ENCODE measurements at regions of chr16 and their contacts with region 1.

Region 1: GRCh38 chr16:27367461-27368357 is 34.3 kb upstream of the IL21R start:
- DNase-seq: peak; percentile 70 to 98 (median 86)
- ATAC-seq: peak; percentile 79
- H3K4me3 ChIP-seq: peak overlapping the region; percentile 23
- H3K4me3 Mint-ChIP-seq: peak overlapping the region; percentile 35
- H3K27ac ChIP-seq: peak overlapping the region; percentile 86 to 98
- H3K27ac Mint-ChIP-seq: peak overlapping the region; percentile 99
- H3K4me1 ChIP-seq: peaks cover 71% of the 10 kb centered on the region
- H3K4me1 Mint-ChIP-seq: peaks cover 72% of the 10 kb centered on the region
- H3K27me3 ChIP-seq: no peaks in the 10 kb centered on the region
- H3K27me3 Mint-ChIP-seq: no peaks in the 10 kb centered on the region
- CTCF ChIP-seq: peak; percentile 87

Region 2: DNA sequence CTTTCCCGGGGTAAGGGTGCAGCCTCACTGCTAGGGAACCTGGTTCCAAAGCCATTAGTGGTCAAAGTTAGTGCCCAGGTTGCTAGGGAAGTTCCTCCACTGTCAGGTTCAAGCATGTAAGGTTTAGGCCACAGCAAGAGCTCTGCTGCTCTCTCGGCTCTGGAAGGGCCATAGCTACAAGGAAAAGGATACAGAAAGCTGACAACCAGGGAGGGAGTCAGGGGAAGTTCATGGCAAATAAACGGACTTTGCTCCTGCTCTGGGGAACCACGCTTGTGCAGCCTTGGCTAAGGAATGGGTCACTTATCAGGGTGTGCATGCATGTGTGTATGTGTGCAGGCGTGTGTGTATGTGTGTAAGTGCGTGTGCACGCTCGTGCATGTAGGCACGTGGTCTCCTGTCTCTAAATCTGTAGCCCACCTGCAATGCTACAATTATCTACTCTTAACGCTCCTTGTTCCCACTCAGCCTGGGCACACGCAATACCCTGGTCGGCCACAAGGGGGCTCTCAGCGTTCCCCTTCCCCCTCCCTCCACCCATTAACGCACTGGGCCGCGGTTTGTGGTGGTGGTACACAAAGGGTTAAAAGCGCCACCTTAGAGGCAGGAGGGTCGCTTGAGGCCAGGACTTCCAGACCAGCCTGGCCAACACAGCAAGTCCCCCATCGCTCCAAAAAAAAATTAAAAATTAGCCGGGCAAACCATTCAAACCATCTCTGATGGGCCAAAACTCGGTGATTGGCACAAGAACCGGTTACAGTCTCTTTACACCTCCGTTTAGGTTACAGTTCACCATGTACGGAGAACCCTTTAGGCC is 212.8 kb before region 1 on chr16:
- CTCF ChIA-PET with region 1: interaction called, 7 read pairs
- POLR2A ChIA-PET with region 1: interaction called, 3 read pairs
- intact Hi-C with region 1: loop called in 1 of 2 experiments (anchors 1 kb)
- DNase-seq: peak; percentile 51 to 83 (median 67)
- ATAC-seq: peak; percentile 84
- H3K4me3 ChIP-seq: no peak overlapping the region
- H3K4me3 Mint-ChIP-seq: no peak overlapping the region
- H3K27ac ChIP-seq: no peak overlapping the region
- H3K27ac Mint-ChIP-seq: no peak overlapping the region
- H3K4me1 ChIP-seq: peaks cover 9% of the 10 kb centered on the region
- H3K4me1 Mint-ChIP-seq: peaks cover 14% of the 10 kb centered on the region
- H3K27me3 ChIP-seq: no peaks in the 10 kb centered on the region
- H3K27me3 Mint-ChIP-seq: no peaks in the 10 kb centered on the region
- CTCF ChIP-seq: peak; percentile 99

Region 3: GRCh38 chr16:27179500-27180072 is 188.1 kb before region 1 on chr16:
- CTCF ChIA-PET with region 1: interaction called, 23 read pairs
- POLR2A ChIA-PET with region 1: interaction called, 26 read pairs
- intact Hi-C with region 1: loop called (anchors 2 to 5 kb)
- DNase-seq: peak; percentile 83 to 95 (median 86)
- ATAC-seq: peak; percentile 99
- H3K4me3 ChIP-seq: no peak overlapping the region
- H3K4me3 Mint-ChIP-seq: no peak overlapping the region
- H3K27ac ChIP-seq: no peak overlapping the region
- H3K27ac Mint-ChIP-seq: peak overlapping the region; percentile 72
- H3K4me1 ChIP-seq: peaks cover 35% of the 10 kb centered on the region
- H3K4me1 Mint-ChIP-seq: peaks cover 55% of the 10 kb centered on the region
- H3K27me3 ChIP-seq: no peaks in the 10 kb centered on the region
- H3K27me3 Mint-ChIP-seq: no peaks in the 10 kb centered on the region
- CTCF ChIP-seq: peak; percentile 84

Region 4: DNA sequence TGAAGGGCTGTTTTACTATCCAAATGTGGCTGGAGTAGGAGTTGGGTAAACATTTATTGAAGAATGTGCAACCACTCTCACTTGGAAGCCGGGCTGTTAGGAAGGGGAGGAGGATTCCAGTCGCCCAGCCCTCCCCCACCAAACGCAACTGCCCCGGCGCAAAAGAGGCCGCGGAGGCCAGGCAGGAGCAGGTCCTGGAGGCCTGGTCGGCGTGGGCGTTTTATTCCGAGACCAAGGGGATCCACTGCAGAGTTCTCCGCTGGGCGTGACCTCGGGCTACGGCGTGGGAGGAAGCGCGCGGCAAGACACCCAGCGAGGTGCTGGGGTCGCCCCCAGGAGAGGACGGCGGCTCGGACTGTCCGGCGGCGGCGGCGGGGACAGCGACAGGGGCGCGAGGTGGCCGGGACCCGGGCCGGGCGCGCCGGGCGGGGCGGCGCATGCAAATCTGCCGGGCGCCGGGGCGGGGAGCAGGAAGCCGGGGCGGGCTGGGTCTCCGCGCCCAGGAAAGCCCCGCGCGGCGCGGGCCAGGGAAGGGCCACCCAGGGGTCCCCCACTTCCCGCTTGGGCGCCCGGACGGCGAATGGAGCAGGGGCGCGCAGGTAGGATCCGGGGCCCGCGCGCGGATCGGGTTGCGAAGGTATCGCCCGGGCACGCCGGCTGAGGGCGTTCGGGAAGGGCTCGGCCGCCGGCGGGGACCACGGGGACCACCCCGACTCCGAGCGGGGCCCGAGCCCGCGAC is 54.1 kb before region 1 on chr16 and contains the start of gene IL4R:
- CTCF ChIA-PET with region 1: interaction called, 31 read pairs
- POLR2A ChIA-PET with region 1: interaction called, 9 read pairs
- intact Hi-C with region 1: loop called (anchors 5 kb)
- DNase-seq: peak; percentile 33 to 84 (median 56)
- ATAC-seq: peak; percentile 46
- H3K4me3 ChIP-seq: peak within 1 kb of the TSS; percentile 91
- H3K4me3 Mint-ChIP-seq: peak within 1 kb of the TSS; percentile 95
- H3K27ac ChIP-seq: peak within 1 kb of the TSS; percentile 89 to 94
- H3K27ac Mint-ChIP-seq: peak within 1 kb of the TSS; percentile 92
- H3K4me1 ChIP-seq: peaks cover 56% of the 10 kb centered on the region
- H3K4me1 Mint-ChIP-seq: peaks cover 47% of the 10 kb centered on the region
- H3K27me3 ChIP-seq: no peaks in the 10 kb centered on the region
- H3K27me3 Mint-ChIP-seq: no peaks in the 10 kb centered on the region
- CTCF ChIP-seq: no peak
- total RNA-seq, gene IL4R: 145 to 147 TPM

Region 5: DNA sequence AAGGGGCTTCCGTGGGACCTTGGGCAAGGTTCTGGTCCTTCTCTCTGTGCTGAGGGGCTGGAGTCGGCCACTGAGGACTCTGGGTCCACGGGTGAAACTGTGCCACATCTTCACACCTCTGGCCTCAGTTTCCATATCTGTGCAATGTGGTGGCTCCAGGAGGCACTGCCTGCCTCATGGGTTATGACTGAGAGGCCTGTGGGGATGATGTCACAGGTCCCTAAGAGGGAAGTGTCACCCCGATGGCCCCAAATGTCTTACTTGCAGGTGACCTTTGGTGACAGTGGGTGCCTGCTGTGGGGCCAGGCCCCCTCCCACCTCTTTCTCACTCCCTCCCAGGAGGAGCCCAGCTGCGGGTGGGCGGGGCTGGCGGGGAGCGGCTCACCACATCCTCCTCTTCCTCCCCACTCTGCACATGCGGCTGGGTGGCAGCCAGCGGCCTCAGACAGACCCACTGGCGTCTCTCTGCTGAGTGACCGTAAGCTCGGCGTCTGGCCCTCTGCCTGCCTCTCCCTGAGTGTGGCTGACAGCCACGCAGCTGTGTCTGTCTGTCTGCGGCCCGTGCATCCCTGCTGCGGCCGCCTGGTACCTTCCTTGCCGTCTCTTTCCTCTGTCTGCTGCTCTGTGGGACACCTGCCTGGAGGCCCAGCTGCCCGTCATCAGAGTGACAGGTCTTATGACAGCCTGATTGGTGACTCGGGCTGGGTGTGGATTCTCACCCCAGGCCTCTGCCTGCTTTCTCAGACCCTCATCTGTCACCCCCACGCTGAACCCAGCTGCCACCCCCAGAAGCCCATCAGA is 34.3 kb after region 1 on chr16 and contains the start of gene IL21R:
- CTCF ChIA-PET with region 1: interaction called, 16 read pairs
- POLR2A ChIA-PET with region 1: interaction called, 134 read pairs
- intact Hi-C with region 1: loop called (anchors 1 to 5 kb)
- DNase-seq: peak; percentile 76 to 95 (median 86)
- ATAC-seq: peak; percentile 81
- H3K4me3 ChIP-seq: peak within 1 kb of the TSS; percentile 99
- H3K4me3 Mint-ChIP-seq: peak within 1 kb of the TSS; percentile 98
- H3K27ac ChIP-seq: peak within 1 kb of the TSS; percentile 81 to 94
- H3K27ac Mint-ChIP-seq: peak within 1 kb of the TSS; percentile 90
- H3K4me1 ChIP-seq: peaks cover 63% of the 10 kb centered on the region
- H3K4me1 Mint-ChIP-seq: peaks cover 79% of the 10 kb centered on the region
- H3K27me3 ChIP-seq: no peaks in the 10 kb centered on the region
- H3K27me3 Mint-ChIP-seq: no peaks in the 10 kb centered on the region
- CTCF ChIP-seq: no peak
- total RNA-seq, gene IL21R: 34.5 to 34.8 TPM

Region 6: DNA sequence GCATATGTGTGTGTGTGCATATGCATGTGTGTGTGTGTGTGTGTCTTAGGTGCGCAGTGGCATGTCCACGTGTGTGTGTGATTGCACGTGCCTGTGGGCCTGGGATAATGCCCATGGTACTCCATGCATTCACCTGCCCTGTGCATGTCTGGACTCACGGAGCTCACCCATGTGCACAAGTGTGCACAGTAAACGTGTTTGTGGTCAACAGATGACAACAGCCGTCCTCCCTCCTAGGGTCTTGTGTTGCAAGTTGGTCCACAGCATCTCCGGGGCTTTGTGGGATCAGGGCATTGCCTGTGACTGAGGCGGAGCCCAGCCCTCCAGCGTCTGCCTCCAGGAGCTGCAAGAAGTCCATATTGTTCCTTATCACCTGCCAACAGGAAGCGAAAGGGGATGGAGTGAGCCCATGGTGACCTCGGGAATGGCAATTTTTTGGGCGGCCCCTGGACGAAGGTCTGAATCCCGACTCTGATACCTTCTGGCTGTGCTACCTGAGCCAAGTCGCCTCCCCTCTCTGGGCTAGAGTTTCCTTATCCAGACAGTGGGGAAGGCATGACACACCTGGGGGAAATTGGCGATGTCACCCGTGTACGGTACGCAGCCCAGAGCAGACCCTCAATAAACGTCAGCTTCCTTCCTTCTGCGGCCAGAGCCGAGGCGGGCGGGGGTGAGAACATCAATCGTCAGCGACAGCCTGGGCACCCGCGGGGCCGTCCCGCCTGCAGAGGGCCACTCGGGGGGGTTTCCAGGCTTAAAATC is 81.9 kb after region 1 on chr16:
- CTCF ChIA-PET with region 1: interaction called, 12 read pairs
- POLR2A ChIA-PET with region 1: interaction called, 8 read pairs
- intact Hi-C with region 1: loop called in 1 of 2 experiments (anchors 2 kb)
- DNase-seq: peak; percentile 31 to 93 (median 60)
- ATAC-seq: peak; percentile 46
- H3K4me3 ChIP-seq: peak overlapping the region; percentile 10
- H3K4me3 Mint-ChIP-seq: peak overlapping the region; percentile 70
- H3K27ac ChIP-seq: peak overlapping the region in 1 of 2 donors; percentile 18
- H3K27ac Mint-ChIP-seq: peak overlapping the region; percentile 93
- H3K4me1 ChIP-seq: peaks cover 78% of the 10 kb centered on the region
- H3K4me1 Mint-ChIP-seq: peaks cover 81% of the 10 kb centered on the region
- H3K27me3 ChIP-seq: no peaks in the 10 kb centered on the region
- H3K27me3 Mint-ChIP-seq: no peaks in the 10 kb centered on the region
- CTCF ChIP-seq: no peak